ENCODE measurements at regions of chr10 and their contacts with region 1.

Region 1: DNA sequence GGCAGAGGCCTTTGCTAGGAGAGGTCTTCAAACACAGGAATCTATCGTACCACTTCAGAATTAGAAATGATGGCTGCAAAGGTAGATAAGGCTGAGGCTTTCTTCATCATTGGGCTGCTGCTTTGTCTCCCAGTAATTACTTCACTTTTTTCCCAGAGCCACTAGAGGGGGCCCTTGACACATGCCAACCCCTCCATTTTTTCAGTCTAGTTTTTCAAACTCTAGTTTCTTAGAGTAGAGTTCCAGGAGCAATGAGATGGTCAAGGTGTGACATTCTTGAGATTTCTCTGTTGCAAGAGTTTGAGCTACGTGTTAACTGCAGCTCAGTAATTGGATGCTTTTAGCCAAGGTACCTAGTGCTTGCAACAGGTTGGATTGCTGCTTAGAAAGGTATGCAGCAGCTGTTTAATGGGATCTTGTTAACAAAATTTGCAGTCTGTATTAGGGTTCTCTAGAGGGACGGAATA is 33.8 kb upstream of the RBM20 start:
- DNase-seq: peak in 1 of 2 donors; percentile 66
- ATAC-seq: peak; percentile 39 to 70 (median 58)
- H3K4me3 ChIP-seq: no peak overlapping the region
- H3K27ac ChIP-seq: peak overlapping the region in 4 of 10 donors; percentile 27 to 39 (median 35)
- H3K4me1 ChIP-seq: peaks cover 0 to 26% (median 4%) of the 10 kb centered on the region in 9 donors
- H3K27me3 ChIP-seq: no peaks in the 10 kb centered on the region
- CTCF ChIP-seq: peak; percentile 64 to 87 (median 83)

Region 2: DNA sequence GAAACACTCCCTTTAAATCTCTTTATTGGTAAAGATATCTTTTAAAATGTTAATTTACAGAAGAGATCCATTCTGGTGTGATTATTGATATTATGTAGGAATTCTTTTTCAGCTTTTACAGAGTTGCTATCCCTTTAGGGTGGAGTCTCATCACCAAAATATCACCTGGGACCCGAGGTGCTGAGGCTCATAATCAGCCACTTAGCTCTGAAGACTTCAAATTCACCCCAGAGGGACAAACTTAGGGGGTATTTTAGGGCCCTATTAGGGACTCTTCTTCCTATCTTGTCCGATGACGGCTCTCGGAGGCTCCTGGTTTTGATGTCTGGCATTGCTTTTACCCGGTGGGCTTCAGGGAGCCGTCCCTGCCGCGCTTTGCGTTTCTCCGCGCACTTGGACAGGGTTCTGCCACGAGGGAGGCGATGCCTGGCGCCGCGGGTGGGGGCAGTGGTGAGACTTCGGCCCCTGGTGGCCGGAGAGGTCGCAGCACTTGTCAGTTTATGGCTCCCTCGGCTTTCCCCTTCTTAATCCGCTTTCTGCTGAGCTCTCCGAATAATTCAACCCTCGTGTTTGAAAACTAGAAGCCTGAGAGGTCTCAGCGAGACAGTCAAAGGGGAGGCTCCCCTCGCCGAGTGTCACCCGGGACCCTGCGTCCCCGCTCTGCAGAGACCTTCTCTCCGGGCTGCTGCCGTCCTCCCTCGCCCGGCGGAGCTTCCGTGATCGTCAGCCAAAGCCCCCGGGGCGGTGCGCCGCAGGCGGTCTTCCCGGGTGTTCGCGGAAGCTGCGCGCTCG is 61.6 kb after region 1 on chr10:
- intact Hi-C with region 1: loop called in 4 of 10 experiments (anchors 5 kb)
- DNase-seq: peak; percentile 69 to 75
- ATAC-seq: peak; percentile 77 to 90 (median 86)
- H3K4me3 ChIP-seq: peak overlapping the region; percentile 26 to 70 (median 61)
- H3K27ac ChIP-seq: peak overlapping the region; percentile 64 to 94 (median 88)
- H3K4me1 ChIP-seq: peaks cover 4 to 87% (median 36%) of the 10 kb centered on the region in 9 donors
- H3K27me3 ChIP-seq: no peaks in the 10 kb centered on the region
- CTCF ChIP-seq: peak; percentile 62 to 96 (median 86)

Region 3: GRCh38 chr10:110681023-110681681 is 70.8 kb after region 1 on chr10:
- intact Hi-C with region 1: loop called in 7 of 10 experiments (anchors 2 to 5 kb)
- DNase-seq: peak; percentile 23 to 57
- ATAC-seq: peak; percentile 52 to 69 (median 60)
- H3K4me3 ChIP-seq: no peak overlapping the region
- H3K27ac ChIP-seq: peak overlapping the region; percentile 7 to 89 (median 78)
- H3K4me1 ChIP-seq: peaks cover 0 to 76% (median 35%) of the 10 kb centered on the region in 9 donors
- H3K27me3 ChIP-seq: peaks cover 0 to 4% (median 0%) of the 10 kb centered on the region in 7 donors
- CTCF ChIP-seq: peak; percentile 31 to 68 (median 62)

Region 4: DNA sequence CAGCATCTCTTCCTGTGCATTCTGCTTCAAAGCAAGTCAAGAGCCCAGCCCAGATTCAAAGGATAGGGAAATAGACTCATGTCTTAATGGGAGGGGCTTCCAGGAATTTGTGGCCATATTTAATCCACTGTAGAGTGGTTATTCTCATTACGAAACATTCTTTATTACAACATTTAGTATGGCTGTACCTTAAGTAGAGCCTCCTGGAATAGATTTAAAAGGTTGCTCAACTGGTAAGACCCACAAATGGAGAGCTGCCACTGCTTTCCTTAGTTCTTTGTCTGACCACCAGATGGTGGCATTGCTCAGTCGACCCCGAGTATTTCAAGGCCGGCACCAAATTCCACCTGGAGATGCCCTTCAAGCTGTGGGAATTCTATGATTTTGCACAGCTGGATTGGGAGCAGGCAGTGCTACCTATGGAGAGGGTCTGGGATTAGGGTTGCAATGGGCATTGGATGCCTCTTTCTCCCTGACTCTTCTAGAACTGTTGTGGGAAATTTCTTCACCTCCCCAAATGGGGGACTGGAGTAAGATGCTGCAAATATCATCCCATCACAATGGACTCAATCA is 136.0 kb after region 1 on chr10:
- intact Hi-C with region 1: loop called in 2 of 10 experiments (anchors 10 kb)
- DNase-seq: peak in 1 of 2 donors; percentile 66
- ATAC-seq: peak; percentile 37 to 76 (median 67)
- H3K4me3 ChIP-seq: no peak overlapping the region
- H3K27ac ChIP-seq: peak overlapping the region in 8 of 10 donors; percentile 6 to 86 (median 52)
- H3K4me1 ChIP-seq: peaks cover 8 to 76% (median 39%) of the 10 kb centered on the region in 9 donors
- H3K27me3 ChIP-seq: no peaks in the 10 kb centered on the region
- CTCF ChIP-seq: peak; percentile 57 to 89 (median 81)

Region 5: GRCh38 chr10:110893559-110894179 is 283.3 kb after region 1 on chr10:
- intact Hi-C with region 1: loop called in 8 of 10 experiments (anchors 5 to 10 kb)
- DNase-seq: no peak
- ATAC-seq: peak; percentile 69 to 88 (median 82)
- H3K4me3 ChIP-seq: no peak overlapping the region
- H3K27ac ChIP-seq: no peak overlapping the region
- H3K4me1 ChIP-seq: peaks cover 0 to 18% (median 5%) of the 10 kb centered on the region in 9 donors
- H3K27me3 ChIP-seq: no peaks in the 10 kb centered on the region
- CTCF ChIP-seq: peak; percentile 31 to 76 (median 61)

Region 6: GRCh38 chr10:110901954-110902819 is 291.8 kb after region 1 on chr10:
- intact Hi-C with region 1: loop called in 5 of 10 experiments (anchors 5 to 10 kb)
- DNase-seq: no peak
- ATAC-seq: peak in 1 of 8 donors; percentile 27
- H3K4me3 ChIP-seq: no peak overlapping the region
- H3K27ac ChIP-seq: no peak overlapping the region
- H3K4me1 ChIP-seq: peaks cover 0 to 11% (median 0%) of the 10 kb centered on the region in 9 donors
- H3K27me3 ChIP-seq: no peaks in the 10 kb centered on the region
- CTCF ChIP-seq: no peak

Region 7: GRCh38 chr10:111598436-111599059 is 988.2 kb after region 1 on chr10:
- intact Hi-C with region 1: loop called in 1 of 10 experiments (anchors 10 kb)
- DNase-seq: peak in 1 of 2 donors; percentile 49
- ATAC-seq: peak in 6 of 8 donors; percentile 47 to 85 (median 68)
- H3K4me3 ChIP-seq: no peak overlapping the region
- H3K27ac ChIP-seq: no peak overlapping the region
- H3K4me1 ChIP-seq: peaks cover 0 to 5% (median 0%) of the 10 kb centered on the region in 9 donors
- H3K27me3 ChIP-seq: no peaks in the 10 kb centered on the region
- CTCF ChIP-seq: peak; percentile 50 to 81 (median 77)